Activated naive CD4-positive, alpha-beta T cell treated with anti-CD3 and anti-CD28 coated beads, Interleukin-2, amount 10 ng/mL, durations not matched to agents 7 days and 5 days (primary cell): ENCODE measurements at regions of chr5 and their contacts with region 1.

Region 1: DNA sequence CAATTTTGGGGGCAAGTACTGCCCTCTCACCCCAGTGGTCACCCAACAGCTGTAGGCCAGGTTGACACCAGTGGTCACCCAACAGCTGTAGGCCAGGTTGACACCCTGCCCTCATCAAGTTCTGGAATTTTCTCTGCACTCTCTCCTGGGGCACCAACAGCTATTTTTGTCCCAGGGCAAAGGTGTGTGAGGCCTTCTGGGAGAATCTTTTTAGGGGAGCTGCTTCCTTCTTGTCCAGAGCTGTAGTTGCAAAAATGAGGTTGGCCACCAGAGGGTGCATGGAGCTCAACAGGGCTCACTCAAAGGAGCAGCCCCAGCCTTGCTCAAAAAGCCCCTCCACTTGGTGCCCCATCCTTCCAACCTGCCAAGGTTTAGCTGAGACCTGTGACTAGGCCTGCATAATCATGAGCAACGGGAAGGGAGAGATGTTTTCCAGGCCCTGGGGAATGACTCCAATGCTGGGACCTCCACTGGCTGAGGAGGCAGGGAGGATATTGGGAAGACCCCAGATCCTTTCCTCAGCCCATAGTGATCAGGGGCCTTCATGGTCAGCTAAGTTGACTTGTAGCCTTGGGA is 10.6 kb upstream of the P4HA2 start:
- DNase-seq: peak; percentile 83
- H3K4me3 Mint-ChIP-seq: no peak overlapping the region
- H3K27ac Mint-ChIP-seq: no peak overlapping the region
- H3K4me1 Mint-ChIP-seq: no peaks in the 10 kb centered on the region
- H3K27me3 Mint-ChIP-seq: peaks cover 24% of the 10 kb centered on the region

Region 2: DNA sequence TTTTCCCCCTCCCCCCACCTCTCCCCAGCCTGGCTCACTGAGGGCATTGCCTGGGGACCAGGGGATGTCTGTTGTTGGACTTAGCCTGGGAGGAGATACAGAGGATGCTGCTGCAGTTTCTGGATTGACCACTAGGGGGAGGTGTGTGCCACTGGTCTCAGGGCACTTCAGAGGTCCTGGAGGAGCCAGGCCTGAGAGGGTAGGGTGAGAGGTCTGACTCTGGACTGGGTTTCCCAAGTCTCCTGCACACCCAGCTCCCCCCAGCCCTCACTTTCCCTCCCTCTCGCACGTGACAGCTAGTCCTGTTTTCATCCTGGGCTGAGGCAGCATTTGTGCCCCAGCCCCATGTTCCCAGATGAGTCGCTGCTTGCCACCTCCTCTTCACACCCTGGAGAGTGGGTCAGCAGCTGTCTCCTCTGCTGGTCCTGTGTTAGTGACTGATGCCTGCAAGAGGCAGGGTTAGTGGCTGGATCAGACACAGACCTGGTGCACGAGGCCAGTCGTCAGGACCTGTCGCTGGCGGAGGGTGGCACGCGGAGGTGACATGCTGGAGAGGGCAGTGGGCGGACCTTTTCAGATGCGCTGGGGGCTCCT is 173.4 kb before region 1 on chr5:
- CTCF ChIA-PET with region 1: interaction called, 12 read pairs
- DNase-seq: peak; percentile 87
- H3K4me3 Mint-ChIP-seq: no peak overlapping the region
- H3K27ac Mint-ChIP-seq: peak overlapping the region; percentile 26
- H3K4me1 Mint-ChIP-seq: peaks cover 19% of the 10 kb centered on the region
- H3K27me3 Mint-ChIP-seq: peaks cover 58% of the 10 kb centered on the region

Region 3: DNA sequence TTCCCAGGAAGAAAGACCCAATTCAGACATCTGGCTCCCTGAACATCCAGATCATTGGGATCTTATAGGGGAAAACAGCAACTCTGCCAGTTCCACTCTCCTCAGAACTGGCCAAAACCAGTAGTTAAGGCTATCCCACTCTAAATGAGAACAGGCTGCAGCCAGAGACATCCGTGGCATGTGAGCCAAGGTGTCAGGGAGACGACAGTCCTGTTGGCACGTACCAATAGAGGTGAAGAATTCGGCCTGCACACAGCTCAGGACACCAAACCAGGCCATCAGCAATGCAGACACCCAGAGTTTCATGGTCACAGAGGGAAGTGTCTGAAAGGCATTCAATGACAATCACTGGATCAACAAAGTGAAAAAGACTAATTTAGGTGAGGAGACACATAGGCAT is 19.9 kb before region 1 on chr5:
- CTCF ChIA-PET with region 1: interaction called, 39 read pairs
- DNase-seq: no peak
- H3K4me3 Mint-ChIP-seq: no peak overlapping the region
- H3K27ac Mint-ChIP-seq: no peak overlapping the region
- H3K4me1 Mint-ChIP-seq: no peaks in the 10 kb centered on the region
- H3K27me3 Mint-ChIP-seq: peaks cover 21% of the 10 kb centered on the region

Region 4: GRCh38 chr5:132227485-132228240 is 10.6 kb before region 1 on chr5 and contains the start of gene P4HA2:
- CTCF ChIA-PET with region 1: interaction called, 39 read pairs
- DNase-seq: peak; percentile 55
- H3K4me3 Mint-ChIP-seq: peak within 1 kb of the TSS; percentile 44
- H3K27ac Mint-ChIP-seq: no peak within 1 kb of the TSS
- H3K4me1 Mint-ChIP-seq: peaks cover 23% of the 10 kb centered on the region
- H3K27me3 Mint-ChIP-seq: peaks cover 81% of the 10 kb centered on the region

Region 5: DNA sequence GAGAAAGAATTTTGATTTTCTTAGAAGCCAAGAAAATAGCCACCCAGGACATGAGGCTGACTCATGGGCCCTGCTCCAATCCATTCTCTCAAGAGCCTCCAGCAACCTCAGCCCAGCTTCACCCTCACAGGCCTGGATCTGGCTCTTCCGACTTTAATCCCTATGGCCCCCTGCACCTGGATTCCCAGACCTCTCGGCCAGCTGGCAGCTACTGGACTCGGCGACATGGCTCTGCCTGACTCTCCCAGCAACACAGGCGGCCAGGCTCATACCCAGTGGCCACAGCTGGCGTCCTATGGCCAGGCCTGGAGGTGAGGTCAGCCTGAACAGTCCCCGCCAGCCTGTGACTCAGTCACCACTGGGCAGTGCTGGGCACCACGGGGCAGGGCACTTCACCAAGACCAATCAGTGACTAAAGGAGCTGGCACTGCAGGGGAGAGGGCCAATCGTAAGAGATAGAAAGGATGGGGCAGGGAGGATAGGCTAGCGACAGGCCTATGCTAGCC is 13.0 kb after region 1 on chr5:
- CTCF ChIA-PET with region 1: interaction called, 21 read pairs
- DNase-seq: no peak
- H3K4me3 Mint-ChIP-seq: no peak overlapping the region
- H3K27ac Mint-ChIP-seq: no peak overlapping the region
- H3K4me1 Mint-ChIP-seq: no peaks in the 10 kb centered on the region
- H3K27me3 Mint-ChIP-seq: peaks cover 41% of the 10 kb centered on the region

Region 6: GRCh38 chr5:132260714-132261551 is 22.7 kb after region 1 on chr5:
- CTCF ChIA-PET with region 1: interaction called, 13 read pairs
- DNase-seq: peak; percentile 19
- H3K4me3 Mint-ChIP-seq: no peak overlapping the region
- H3K27ac Mint-ChIP-seq: no peak overlapping the region
- H3K4me1 Mint-ChIP-seq: no peaks in the 10 kb centered on the region
- H3K27me3 Mint-ChIP-seq: peaks cover 47% of the 10 kb centered on the region

Region 7: GRCh38 chr5:132301344-132302271 is 63.4 kb after region 1 on chr5:
- CTCF ChIA-PET with region 1: no interaction called
- DNase-seq: no peak
- H3K4me3 Mint-ChIP-seq: no peak overlapping the region
- H3K27ac Mint-ChIP-seq: no peak overlapping the region
- H3K4me1 Mint-ChIP-seq: no peaks in the 10 kb centered on the region
- H3K27me3 Mint-ChIP-seq: peaks cover 23% of the 10 kb centered on the region

Region 8: GRCh38 chr5:132500931-132501630 is 262.8 kb after region 1 on chr5:
- CTCF ChIA-PET with region 1: interaction called, 17 read pairs
- DNase-seq: peak; percentile 83
- H3K4me3 Mint-ChIP-seq: no peak overlapping the region
- H3K27ac Mint-ChIP-seq: peak overlapping the region; percentile 12
- H3K4me1 Mint-ChIP-seq: peaks cover 39% of the 10 kb centered on the region
- H3K27me3 Mint-ChIP-seq: peaks cover 24% of the 10 kb centered on the region